K562 (cell line): ENCODE measurements at regions of chr22 and their contacts with region 1.

Region 1: DNA sequence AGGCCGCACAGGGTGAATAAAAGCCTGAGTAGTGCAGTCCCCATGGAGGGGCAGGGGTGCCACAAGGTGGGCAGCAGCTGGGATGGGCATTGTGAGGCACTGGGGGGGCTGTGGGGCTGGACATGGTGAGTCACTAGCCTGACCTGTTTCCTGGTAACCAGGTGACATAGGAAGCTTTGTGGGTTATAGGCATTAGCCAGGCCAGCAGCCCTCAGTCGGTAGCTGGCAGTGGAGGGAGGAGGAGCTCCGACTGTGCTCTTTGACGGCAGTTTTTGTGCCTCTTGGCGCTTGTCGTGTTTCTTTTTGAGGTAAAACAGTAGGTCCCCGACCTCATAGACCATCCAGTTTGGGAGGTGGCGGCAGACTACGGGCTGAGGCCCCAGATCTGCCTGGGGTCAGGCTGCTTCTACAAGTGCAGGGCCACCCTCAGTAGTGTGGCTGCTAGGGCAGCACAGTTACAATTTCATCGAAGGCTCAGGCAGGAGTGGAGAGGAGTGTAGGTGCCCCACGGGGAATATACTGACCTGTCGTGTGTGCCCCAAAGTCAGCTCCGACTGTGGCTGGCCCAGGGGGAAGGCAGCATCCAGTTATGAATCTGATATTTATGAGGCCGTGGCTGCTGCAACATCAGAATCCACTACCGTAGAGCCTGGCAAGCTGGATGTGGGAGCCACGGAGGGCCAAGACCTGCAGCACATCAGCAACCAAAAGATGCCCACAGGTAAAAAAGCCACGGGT is 107.7 kb downstream of the CRYBB2 start:
- DNase-seq: no peak
- ATAC-seq: no peak
- H3K4me3 ChIP-seq: no peak overlapping the region
- H3K27ac ChIP-seq: no peak overlapping the region
- H3K4me1 ChIP-seq: no peaks in the 10 kb centered on the region
- H3K27me3 ChIP-seq: peaks cover 0 to 3% of the 10 kb centered on the region in 2 experiments; a peak in 1 of 5 replicates
- CTCF ChIP-seq: no peak
- EP300 ChIP-seq: no peak
- POLR2A ChIP-seq: no peak
- RAD21 ChIP-seq: no peak

Region 2: DNA sequence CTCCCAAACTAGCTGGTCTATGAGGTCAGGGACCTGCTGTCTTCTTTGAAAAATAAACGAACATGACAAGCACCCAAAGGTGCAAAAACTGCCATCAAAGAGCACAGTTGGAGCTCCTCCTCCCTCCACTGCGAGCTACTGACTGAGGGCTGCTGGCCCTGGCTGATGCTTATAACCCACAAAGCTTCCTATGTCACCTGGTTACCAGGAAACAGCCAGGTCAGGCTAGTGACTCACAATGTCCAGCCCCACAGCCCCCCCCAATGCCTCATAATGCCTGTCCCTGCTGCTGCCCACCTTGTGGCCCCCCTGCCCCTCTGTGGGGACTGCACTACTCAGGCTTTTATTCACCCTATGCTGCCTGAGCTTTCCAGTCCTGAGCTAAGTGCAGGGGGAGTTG is 1695.0 kb before region 1 on chr22 and contains the start of gene DRICH1:
- CTCF ChIA-PET with region 1: no interaction called
- POLR2A ChIA-PET with region 1: no interaction called
- in situ Hi-C with region 1: loop called (anchors 10 kb)
- intact Hi-C with region 1: no loop called
- DNase-seq: no peak
- ATAC-seq: no peak
- H3K4me3 ChIP-seq: no peak within 1 kb of the TSS
- H3K27ac ChIP-seq: no peak within 1 kb of the TSS
- H3K4me1 ChIP-seq: no peaks in the 10 kb centered on the region; a peak in 2 of 5 replicates
- H3K27me3 ChIP-seq: no peaks in the 10 kb centered on the region
- CTCF ChIP-seq: no peak
- EP300 ChIP-seq: no peak
- POLR2A ChIP-seq: no peak
- RAD21 ChIP-seq: no peak
- polyA plus RNA-seq, gene DRICH1: 0.07 to 0.08 TPM

Region 3: DNA sequence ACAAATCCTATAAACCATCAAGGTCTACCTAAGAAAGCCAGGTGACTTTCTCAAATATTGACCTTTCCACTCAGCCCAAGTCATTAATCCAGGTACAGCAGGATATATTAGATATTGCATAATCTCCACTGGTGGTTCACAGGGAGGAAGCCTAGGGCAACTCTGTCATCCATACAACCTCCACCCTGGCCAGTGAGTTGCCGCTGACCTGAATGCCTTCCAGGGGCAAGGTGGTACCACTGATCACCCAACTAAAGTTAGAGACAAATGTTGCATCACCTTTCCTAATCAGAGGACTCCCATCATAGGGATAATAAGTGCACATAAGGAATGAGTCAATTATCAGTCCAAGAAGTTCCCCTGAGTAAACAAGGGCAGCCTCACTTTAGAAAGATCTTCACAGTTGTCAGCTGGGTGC is 795.1 kb before region 1 on chr22:
- CTCF ChIA-PET with region 1: no interaction called
- POLR2A ChIA-PET with region 1: no interaction called
- in situ Hi-C with region 1: no loop called
- intact Hi-C with region 1: no loop called
- DNase-seq: no peak
- ATAC-seq: no peak
- H3K4me3 ChIP-seq: no peak overlapping the region
- H3K27ac ChIP-seq: no peak overlapping the region
- H3K4me1 ChIP-seq: no peaks in the 10 kb centered on the region; a peak in 1 of 5 replicates
- H3K27me3 ChIP-seq: peaks cover 0 to 5% of the 10 kb centered on the region in 2 experiments; a peak in 2 of 5 replicates
- CTCF ChIP-seq: no peak
- EP300 ChIP-seq: no peak
- POLR2A ChIP-seq: no peak
- RAD21 ChIP-seq: no peak

Region 4: GRCh38 chr22:26008587-26008986 is 681.4 kb after region 1 on chr22:
- CTCF ChIA-PET with region 1: no interaction called
- POLR2A ChIA-PET with region 1: no interaction called
- in situ Hi-C with region 1: no loop called
- intact Hi-C with region 1: no loop called
- DNase-seq: no peak
- ATAC-seq: no peak
- H3K4me3 ChIP-seq: no peak overlapping the region
- H3K27ac ChIP-seq: no peak overlapping the region
- H3K4me1 ChIP-seq: no peaks in the 10 kb centered on the region
- H3K27me3 ChIP-seq: no peaks in the 10 kb centered on the region
- CTCF ChIP-seq: no peak
- EP300 ChIP-seq: no peak
- POLR2A ChIP-seq: no peak
- RAD21 ChIP-seq: no peak